Heart left ventricle (tissue), 16 donors: ENCODE measurements at regions of chr12 and their contacts with region 1.

Region 1: GRCh38 chr12:76621582-76622024 is 62.0 kb upstream of the OSBPL8 start:
- DNase-seq: peak in 4 of 5 donors; percentile 48 to 62 (median 57)
- ATAC-seq: peak in 3 of 4 donors; percentile 75 to 84 (median 83)
- H3K4me3 ChIP-seq: no peak overlapping the region
- H3K27ac ChIP-seq: no peak overlapping the region
- H3K4me1 ChIP-seq: peaks cover 0 to 7% (median 4%) of the 10 kb centered on the region in 12 donors
- H3K27me3 ChIP-seq: no peaks in the 10 kb centered on the region
- CTCF ChIP-seq: peak; percentile 88 to 98 (median 94)
- POLR2A ChIP-seq: no peak

Region 2: DNA sequence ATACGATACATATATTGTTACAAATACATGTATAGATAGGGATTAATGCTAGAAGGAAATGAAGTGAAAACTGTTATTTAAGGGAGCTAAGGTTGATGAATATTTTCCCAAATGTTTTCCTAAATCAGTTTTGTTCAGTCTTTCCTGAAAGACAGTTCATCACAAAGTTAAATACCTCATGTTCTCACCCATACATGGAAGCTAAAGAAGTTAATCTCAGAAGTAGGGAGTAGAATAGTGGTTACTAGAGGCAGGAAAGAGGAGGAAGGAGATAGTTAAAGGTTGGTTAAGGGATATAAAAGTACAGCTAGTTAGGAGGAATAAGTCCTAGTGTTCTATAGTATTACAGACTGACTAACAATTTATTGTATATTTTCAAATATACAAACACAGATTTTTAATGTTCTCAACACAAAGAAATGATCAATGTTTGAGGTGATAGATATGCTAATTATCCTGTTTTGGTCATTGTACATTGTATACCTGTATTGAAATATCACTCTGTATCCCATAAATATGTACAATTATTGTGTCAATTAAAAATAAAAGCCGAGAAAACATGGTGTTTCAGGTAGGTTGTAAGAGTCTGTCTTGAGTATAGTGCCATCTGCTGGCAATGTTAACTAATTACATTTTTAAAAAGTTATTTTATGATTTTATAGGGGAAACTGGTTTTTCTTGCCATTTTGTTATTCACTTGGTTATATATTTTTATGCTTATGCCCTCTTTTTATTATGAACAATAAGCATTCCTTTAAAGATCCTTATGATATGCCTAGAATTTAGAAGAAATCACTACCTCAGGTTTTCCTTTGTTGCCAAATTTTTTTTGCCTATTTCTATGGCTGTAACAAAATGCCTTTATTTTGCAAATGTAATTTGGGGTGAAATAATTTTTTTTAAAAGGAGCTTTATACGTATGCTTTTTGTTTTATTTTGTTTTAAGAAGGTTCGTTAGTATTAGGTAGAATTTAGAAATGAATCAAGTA is 169.3 kb after region 1 on chr12:
- intact Hi-C with region 1: loop called (anchors 1 to 2 kb)
- DNase-seq: no peak
- ATAC-seq: no peak
- H3K4me3 ChIP-seq: no peak overlapping the region
- H3K27ac ChIP-seq: peak overlapping the region in 1 of 12 donors; percentile 37
- H3K4me1 ChIP-seq: peaks cover 0 to 65% (median 24%) of the 10 kb centered on the region in 12 donors
- H3K27me3 ChIP-seq: no peaks in the 10 kb centered on the region
- CTCF ChIP-seq: peak; percentile 42 to 88 (median 74)
- POLR2A ChIP-seq: no peak

Region 3: DNA sequence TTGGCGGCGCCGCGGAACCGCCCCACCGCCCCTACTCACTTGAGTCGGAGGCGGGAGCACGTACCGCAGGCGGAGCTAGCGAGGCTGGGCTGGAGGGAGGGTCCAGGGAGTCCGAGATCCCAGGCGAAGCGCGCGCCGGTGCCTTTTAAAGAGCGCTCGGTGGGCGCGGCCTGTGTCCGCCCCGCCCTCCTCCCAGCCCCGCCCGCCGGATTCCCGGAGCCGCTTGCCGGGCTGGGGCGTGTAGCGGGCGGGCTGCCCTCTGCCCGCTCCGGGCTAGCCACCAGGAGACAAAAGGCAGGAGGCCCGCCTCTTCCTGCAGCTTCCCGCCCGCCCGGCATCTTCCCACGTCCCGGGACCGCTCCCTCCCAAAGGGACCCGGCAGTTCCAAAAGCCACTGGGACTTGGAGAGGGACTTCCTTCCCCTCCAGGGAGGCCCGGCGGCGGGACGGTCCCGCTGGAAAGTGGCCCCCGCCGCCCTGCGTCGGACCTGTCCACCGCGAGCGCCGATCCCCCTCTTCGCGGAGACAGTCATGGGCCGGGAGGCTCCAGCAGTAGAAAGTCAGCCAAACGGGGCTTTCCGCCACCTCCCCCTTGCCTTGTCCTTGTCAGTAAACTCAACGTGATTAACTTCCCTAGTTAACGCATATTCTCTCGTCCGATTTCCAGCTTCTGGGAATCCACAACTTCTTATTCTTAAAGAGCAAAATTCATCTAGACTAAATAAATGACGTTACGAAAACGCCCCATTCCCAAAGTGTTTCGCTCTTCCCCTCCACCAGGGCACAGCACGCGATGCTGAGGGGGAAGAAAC is 257.5 kb after region 1 on chr12 and contains the start of gene CSRP2:
- intact Hi-C with region 1: loop called in 1 of 10 experiments (anchors 2 kb)
- DNase-seq: peak; percentile 90 to 94 (median 93)
- ATAC-seq: peak; percentile 92 to 97 (median 96)
- H3K4me3 ChIP-seq: peak within 1 kb of the TSS; percentile 57 to 92 (median 70)
- H3K27ac ChIP-seq: peak within 1 kb of the TSS; percentile 48 to 94 (median 90)
- H3K4me1 ChIP-seq: peaks cover 0 to 34% (median 14%) of the 10 kb centered on the region in 12 donors
- H3K27me3 ChIP-seq: peaks cover 0 to 21% (median 0%) of the 10 kb centered on the region in 9 donors
- CTCF ChIP-seq: peak in 6 of 12 donors; percentile 11 to 35 (median 30)
- POLR2A ChIP-seq: peak in 1 of 2 donors; percentile 96
- total RNA-seq, gene CSRP2: 16.2 to 36.7 (median 24.0) TPM

Region 4: DNA sequence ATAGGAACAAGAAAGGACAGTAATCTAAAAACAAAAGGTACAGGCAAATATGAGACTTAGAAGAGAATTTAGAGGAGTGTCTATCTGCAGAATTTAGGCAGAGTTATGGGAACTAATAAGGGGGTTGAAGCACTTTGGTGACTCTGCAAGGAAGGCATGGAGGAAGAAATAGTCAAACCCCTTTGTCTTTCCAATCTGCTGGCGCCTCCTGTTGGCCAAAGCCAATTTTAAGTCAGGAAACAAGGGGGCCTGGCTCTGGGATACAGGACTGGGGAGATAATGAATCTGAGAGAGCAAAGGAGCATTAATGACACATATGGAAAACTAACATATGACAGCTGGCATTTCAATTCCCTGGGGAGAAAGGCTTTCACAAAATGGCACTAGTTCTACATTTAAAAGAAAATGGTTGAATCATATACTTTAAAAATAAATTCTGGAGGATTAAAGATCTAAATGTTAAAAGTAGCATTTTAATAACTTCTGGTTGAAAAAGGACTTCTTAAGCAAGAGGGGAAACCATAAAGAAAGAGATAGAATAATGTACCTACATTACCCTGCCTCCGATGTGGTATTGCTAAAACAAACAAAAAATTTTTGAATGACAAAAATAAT is 305.7 kb after region 1 on chr12:
- intact Hi-C with region 1: loop called in 5 of 10 experiments (anchors 5 to 10 kb)
- DNase-seq: peak in 1 of 5 donors; percentile 28
- ATAC-seq: no peak
- H3K4me3 ChIP-seq: no peak overlapping the region
- H3K27ac ChIP-seq: no peak overlapping the region
- H3K4me1 ChIP-seq: no peaks in the 10 kb centered on the region
- H3K27me3 ChIP-seq: no peaks in the 10 kb centered on the region
- CTCF ChIP-seq: peak; percentile 19 to 57 (median 41)
- POLR2A ChIP-seq: no peak